Right ventricle myocardium inferior (tissue), 1 donor: ENCODE measurements at regions of chr3 and their contacts with region 1.

Region 1: GRCh38 chr3:44861412-44862220 is at the start of gene TMEM42:
- DNase-seq: peak; percentile 96
- ATAC-seq: peak; percentile 98
- total RNA-seq, gene TMEM42: 8.8 TPM

Region 2: DNA sequence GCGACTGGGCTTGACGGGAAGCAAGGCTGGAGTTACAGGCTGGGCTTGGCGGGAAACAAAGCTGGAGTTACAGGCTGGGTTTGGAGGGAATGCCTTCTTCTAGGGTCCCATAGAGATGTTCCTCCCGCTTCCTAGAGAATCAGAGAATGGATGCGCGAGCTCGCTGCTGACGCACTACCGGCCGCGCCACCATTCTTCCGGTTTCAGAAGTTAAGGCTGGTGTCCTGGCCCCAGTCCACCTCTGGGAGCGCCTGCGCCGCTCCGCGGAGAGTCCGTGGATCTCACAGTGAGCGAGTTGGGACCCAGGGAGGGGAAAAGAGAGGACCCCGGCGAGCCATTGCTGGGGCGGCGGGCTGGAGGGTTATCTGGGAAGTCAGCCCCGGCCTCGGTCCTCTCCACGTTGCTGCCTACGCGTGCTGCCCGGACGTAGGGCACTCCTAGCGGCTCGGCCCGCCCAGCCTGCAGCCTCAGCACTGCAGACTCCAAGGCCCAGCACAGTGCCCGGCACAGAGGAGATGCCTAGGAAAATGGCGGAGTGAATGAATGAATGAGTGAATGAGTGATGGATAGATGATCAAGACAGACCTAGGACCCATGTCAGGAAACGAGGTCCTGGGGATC is 149.1 kb before region 1 on chr3 and contains the start of gene ZNF502:
- intact Hi-C with region 1: loop called (anchors 5 kb)
- DNase-seq: peak; percentile 92
- ATAC-seq: peak; percentile 98
- total RNA-seq, gene ZNF502: 2.4 TPM

Region 3: DNA sequence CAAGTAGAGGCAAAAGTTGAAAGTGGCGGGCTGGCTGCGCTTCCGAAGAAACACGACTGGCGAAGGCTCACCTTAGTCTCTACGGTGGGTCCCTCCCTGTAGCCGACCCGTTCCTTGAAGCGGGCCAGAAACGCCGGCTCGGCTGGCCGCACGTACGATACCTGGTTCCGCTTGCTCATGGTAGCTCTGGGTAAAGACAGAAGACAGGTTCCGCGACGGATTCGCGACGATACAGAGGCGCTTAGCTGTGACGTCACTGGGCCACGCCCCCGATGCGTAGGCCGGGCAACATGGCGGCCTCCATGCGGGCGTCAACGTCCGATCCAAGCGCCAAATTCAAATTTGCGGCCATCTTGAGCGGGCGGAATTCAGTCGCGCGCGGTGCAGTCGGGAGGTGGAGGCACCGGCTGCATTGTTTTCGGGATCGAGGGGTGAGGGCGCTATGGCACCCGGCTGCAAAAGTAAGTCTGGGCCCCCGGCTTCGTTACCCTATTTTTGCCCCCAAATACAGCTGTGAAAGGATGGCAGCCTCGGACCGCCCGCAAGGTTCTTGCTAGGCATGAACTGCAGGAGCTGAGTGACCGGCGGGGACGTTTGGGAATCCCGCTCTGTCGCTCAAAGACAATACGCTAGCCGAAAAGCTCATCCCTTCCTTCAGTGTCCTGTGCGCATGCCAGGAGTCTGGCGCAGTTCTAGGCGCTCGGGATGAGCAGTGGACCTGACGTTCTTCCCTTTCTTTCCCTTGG is 100.0 kb before region 1 on chr3 and contains the starts of genes KIAA1143 and KIF15:
- intact Hi-C with region 1: loop called (anchors 2 kb)
- DNase-seq: peak; percentile 98
- ATAC-seq: peak; percentile 99
- total RNA-seq, gene KIAA1143: 32.1 TPM
- total RNA-seq, gene KIF15: 1.2 TPM